ENCODE measurements at regions of chr1 and their contacts with region 1.

Region 1: GRCh38 chr1:117067533-117068370 is 7.6 kb downstream of the TTF2 start:
- DNase-seq: peak; percentile 65
- ATAC-seq: peak; percentile 65
- H3K4me3 Mint-ChIP-seq: no peak overlapping the region
- H3K27ac Mint-ChIP-seq: no peak overlapping the region
- H3K4me1 Mint-ChIP-seq: peaks cover 36% of the 10 kb centered on the region
- H3K27me3 Mint-ChIP-seq: no peaks in the 10 kb centered on the region

Region 2: GRCh38 chr1:117093870-117094621 is 26.3 kb after region 1 on chr1:
- CTCF ChIA-PET with region 1: interaction called, 89 read pairs
- POLR2A ChIA-PET with region 1: interaction called, 3 read pairs
- intact Hi-C with region 1: loop called in 1 of 2 experiments (anchors 2 kb)
- DNase-seq: peak; percentile 60
- ATAC-seq: peak; percentile 85
- H3K4me3 Mint-ChIP-seq: no peak overlapping the region
- H3K27ac Mint-ChIP-seq: no peak overlapping the region
- H3K4me1 Mint-ChIP-seq: peaks cover 19% of the 10 kb centered on the region
- H3K27me3 Mint-ChIP-seq: no peaks in the 10 kb centered on the region

Region 3: DNA sequence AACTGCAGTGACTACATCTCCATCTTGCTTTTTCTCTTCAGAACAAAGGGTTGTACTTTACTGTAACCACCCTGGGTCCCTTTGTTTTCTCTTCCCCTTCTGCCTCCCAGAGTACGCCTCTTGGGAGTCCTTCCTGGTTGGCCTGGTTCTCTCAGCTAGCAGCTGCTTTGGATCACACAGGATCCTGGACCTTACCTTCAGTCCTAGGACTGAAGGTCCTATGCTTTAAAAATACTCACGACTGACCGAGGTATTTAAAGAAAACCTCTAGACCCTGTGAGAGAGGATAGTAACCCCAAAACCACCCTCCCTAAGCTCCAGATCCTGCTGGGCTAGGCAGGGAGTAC is 49.0 kb after region 1 on chr1:
- CTCF ChIA-PET with region 1: interaction called, 12 read pairs
- POLR2A ChIA-PET with region 1: interaction called, 3 read pairs
- intact Hi-C with region 1: no loop called
- DNase-seq: no peak
- ATAC-seq: no peak
- H3K4me3 Mint-ChIP-seq: no peak overlapping the region
- H3K27ac Mint-ChIP-seq: no peak overlapping the region
- H3K4me1 Mint-ChIP-seq: peaks cover 8% of the 10 kb centered on the region
- H3K27me3 Mint-ChIP-seq: peaks cover 4% of the 10 kb centered on the region

Region 4: GRCh38 chr1:117128323-117129079 is 60.7 kb after region 1 on chr1:
- CTCF ChIA-PET with region 1: interaction called, 46 read pairs
- POLR2A ChIA-PET with region 1: no interaction called
- intact Hi-C with region 1: loop called (anchors 1 kb)
- DNase-seq: no peak
- ATAC-seq: peak; percentile 44
- H3K4me3 Mint-ChIP-seq: no peak overlapping the region
- H3K27ac Mint-ChIP-seq: no peak overlapping the region
- H3K4me1 Mint-ChIP-seq: no peaks in the 10 kb centered on the region
- H3K27me3 Mint-ChIP-seq: peaks cover 9% of the 10 kb centered on the region

Region 5: GRCh38 chr1:117284399-117285215 is 216.9 kb after region 1 on chr1:
- CTCF ChIA-PET with region 1: interaction called, 9 read pairs
- POLR2A ChIA-PET with region 1: no interaction called
- intact Hi-C with region 1: loop called in 1 of 2 experiments (anchors 1 kb)
- DNase-seq: no peak
- ATAC-seq: no peak
- H3K4me3 Mint-ChIP-seq: no peak overlapping the region
- H3K27ac Mint-ChIP-seq: no peak overlapping the region
- H3K4me1 Mint-ChIP-seq: no peaks in the 10 kb centered on the region
- H3K27me3 Mint-ChIP-seq: no peaks in the 10 kb centered on the region

Measured in activated CD4-positive, alpha-beta T cell treated with anti-CD3 and anti-CD28 coated beads for 36 hours (primary cell).